CD14-positive monocyte (primary cell): ENCODE measurements at regions of chr1 and their contacts with region 1.

Region 1: GRCh38 chr1:3695326-3696217 is 43.3 kb downstream of the TP73 start:
- DNase-seq: peak in 2 of 3 donors; percentile 37 to 42
- H3K4me3 ChIP-seq: peak overlapping the region in 1 of 3 experiments; percentile 30
- H3K4me3 Mint-ChIP-seq: peak overlapping the region; percentile 73 to 86
- H3K27ac ChIP-seq: no peak overlapping the region
- H3K27ac Mint-ChIP-seq: no peak overlapping the region
- H3K4me1 ChIP-seq: peaks cover 3 to 10% of the 10 kb centered on the region in 2 donors
- H3K4me1 Mint-ChIP-seq: peaks cover 8% of the 10 kb centered on the region
- H3K27me3 ChIP-seq: no peaks in the 10 kb centered on the region
- H3K27me3 Mint-ChIP-seq: peaks cover 7 to 12% (median 7%) of the 10 kb centered on the region in 3 donors
- CTCF ChIP-seq: peak; percentile 86

Region 2: DNA sequence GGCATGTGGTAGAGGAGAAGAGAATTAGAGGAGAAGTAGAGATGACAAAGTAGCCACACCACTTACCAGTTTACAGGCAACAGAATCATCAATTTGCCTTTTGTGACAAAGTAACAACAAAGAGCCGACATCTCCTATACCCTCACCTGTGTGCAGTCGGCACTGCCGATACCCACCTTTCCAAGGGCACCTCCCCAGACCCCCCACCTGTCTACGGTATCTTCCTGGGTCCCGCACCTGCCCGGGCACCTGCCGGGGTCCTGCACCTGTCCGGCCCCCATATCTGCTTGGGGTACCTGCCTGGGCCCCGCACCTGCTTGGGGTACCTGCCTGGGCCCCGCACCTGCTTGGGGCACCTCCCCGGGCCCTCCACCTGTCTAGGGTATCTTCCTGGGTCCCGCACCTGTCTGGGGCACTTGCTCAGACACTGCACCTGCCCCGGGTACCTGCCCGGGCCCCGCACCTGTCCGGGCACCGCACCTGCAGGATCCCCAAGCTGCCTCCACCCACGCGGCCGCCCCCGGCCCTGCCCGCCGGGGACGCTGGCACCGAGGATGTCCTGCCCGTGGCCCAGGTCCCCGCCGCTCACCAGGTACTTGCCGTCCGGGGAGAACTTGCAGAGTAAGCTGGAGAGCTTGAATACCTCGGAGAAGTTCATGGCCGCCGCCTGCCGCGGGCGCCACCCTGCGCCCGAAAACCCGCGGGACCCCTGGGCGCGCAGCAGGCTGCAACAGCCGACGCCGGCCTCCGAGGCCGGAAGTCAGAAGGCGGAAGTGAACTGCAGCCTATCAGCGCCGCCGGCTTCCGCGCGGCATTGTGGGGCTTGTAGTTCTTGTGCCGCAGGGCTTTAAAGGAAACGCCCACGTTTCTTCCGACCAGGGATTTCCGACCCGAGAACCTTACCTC is 46.0 kb before region 1 on chr1 and contains the start of gene WRAP73:
- intact Hi-C with region 1: no loop called
- DNase-seq: peak; percentile 86 to 93 (median 87)
- H3K4me3 ChIP-seq: peak within 1 kb of the TSS; percentile 71 to 91 (median 75)
- H3K4me3 Mint-ChIP-seq: peak within 1 kb of the TSS; percentile 82 to 90
- H3K27ac ChIP-seq: peak within 1 kb of the TSS in 1 of 2 donors; percentile 66
- H3K27ac Mint-ChIP-seq: peak within 1 kb of the TSS in 2 of 7 donors; percentile 87 to 89
- H3K4me1 ChIP-seq: peaks cover 36 to 48% of the 10 kb centered on the region in 2 donors
- H3K4me1 Mint-ChIP-seq: peaks cover 26% of the 10 kb centered on the region
- H3K27me3 ChIP-seq: peaks cover 34 to 41% of the 10 kb centered on the region in 2 donors
- H3K27me3 Mint-ChIP-seq: peaks cover 35 to 44% (median 39%) of the 10 kb centered on the region in 3 donors
- CTCF ChIP-seq: peak; percentile 16
- polyA plus RNA-seq, gene WRAP73: 26.1 to 64.9 (median 33.2) TPM

Region 3: DNA sequence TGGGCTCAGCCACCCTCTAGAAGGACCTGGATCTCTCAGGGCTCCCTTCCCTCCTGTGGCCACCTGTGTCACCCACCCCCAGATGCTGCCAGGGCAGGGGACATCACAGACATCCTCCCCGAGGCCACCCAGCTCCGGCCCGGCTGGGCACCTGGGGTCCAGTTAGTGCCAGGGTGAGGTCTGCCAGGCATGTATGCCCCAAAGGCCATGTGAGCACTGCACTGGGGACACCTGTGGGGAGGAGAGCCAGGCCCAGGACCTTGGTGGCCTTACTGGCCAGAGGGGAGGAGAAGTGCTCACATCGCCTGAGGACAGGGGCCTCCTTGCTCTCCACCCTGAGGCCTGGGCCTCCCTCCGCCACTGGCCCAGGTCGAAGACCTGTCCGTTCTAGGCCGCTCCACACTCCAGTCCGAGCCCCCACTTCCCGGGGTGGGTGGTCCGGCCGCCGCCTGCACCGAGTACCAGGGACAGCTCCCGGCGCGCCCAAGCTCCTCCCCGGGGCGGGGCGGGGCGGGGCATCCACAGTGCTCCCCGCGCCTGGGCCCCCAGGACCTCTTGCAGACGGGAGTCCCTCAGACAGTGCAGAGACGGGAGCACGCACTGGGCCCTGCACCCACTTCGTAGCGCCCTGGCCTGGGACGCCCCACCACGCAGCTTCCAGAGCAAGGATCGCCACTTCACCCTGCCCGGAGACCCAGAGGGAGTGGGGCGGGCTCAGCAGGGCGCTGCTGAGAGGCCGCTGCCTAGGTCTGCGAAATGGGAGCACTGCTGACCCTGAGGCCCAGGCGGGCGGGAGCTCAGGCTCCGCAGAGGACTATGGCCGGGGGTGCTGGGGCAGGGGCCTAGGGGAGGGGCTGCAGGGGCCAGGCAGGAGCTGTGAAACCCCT is 22.4 kb after region 1 on chr1:
- intact Hi-C with region 1: loop called in 1 of 2 experiments (anchors 2 kb)
- DNase-seq: no peak
- H3K4me3 ChIP-seq: no peak overlapping the region
- H3K4me3 Mint-ChIP-seq: no peak overlapping the region
- H3K27ac ChIP-seq: no peak overlapping the region
- H3K27ac Mint-ChIP-seq: no peak overlapping the region
- H3K4me1 ChIP-seq: peaks cover 6 to 9% of the 10 kb centered on the region in 2 donors
- H3K4me1 Mint-ChIP-seq: peaks cover 2% of the 10 kb centered on the region
- H3K27me3 ChIP-seq: peaks cover 0 to 3% of the 10 kb centered on the region in 2 donors
- H3K27me3 Mint-ChIP-seq: peaks cover 4 to 15% (median 6%) of the 10 kb centered on the region in 3 donors
- CTCF ChIP-seq: no peak